Naive thymus-derived CD4-positive, alpha-beta T cell (primary cell): ENCODE measurements at regions of chr11 and their contacts with region 1.

Region 1: DNA sequence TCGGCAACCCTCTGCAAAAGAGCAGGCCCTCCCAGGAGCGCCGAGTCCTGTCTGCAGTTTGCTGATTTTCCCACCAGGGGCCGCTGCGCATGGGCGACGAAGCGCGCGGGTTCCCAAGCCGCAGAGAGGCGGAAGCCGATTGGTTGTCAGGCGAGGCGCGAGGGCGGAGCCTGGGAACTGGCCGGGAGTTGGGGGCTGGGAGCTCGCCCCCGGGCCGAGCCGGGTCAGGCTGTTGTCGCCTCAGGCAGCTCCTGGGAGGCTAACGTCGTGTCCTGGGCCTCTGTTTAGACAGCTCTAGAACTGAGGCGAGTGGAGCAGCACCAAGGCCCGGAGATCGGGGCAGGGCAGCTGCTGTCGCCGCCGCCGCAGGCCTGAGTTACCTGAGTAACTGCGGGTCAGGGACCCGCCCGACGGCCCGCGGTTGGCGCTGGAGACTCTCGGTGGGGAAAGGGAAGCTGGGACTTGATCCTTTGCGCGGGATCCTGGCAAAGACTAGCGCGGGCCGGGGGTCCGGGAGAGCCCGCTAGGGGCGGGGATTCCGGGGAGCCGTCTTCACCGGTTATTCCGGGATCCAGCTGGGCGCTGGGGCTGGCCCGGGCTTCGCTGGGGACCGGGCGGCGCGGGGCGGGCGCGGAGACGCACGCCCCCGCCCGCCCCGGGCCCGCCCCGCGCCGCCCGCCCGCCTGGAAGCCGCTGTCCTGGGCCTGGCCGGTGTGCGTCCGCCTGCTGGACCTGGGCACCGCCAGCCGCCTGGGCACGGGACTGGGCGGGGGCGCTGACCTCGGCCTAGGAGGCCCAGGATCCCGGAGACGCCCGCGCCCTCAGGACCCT is at the start of gene STIM1:
- DNase-seq: peak; percentile 94 to 99 (median 97)
- ATAC-seq: peak; percentile 89
- H3K4me3 ChIP-seq: peak within 1 kb of the TSS; percentile 87
- H3K4me3 Mint-ChIP-seq: peak within 1 kb of the TSS; percentile 86 to 98 (median 92)
- H3K27ac ChIP-seq: peak within 1 kb of the TSS; percentile 92
- H3K27ac Mint-ChIP-seq: peak within 1 kb of the TSS; percentile 93 to 100 (median 98)
- H3K4me1 ChIP-seq: peaks cover 49 to 57% of the 10 kb centered on the region in 2 donors
- H3K4me1 Mint-ChIP-seq: peaks cover 53 to 72% (median 61%) of the 10 kb centered on the region in 7 donors
- H3K27me3 ChIP-seq: no peaks in the 10 kb centered on the region
- H3K27me3 Mint-ChIP-seq: peaks cover 0 to 2% (median 0%) of the 10 kb centered on the region in 5 donors
- total RNA-seq, gene STIM1: 95.6 to 117 (median 103) TPM

Region 2: GRCh38 chr11:3807909-3808860 is 47.0 kb before region 1 on chr11 and contains the start of gene PGAP2:
- CTCF ChIA-PET with region 1: interaction called, 6 read pairs
- POLR2A ChIA-PET with region 1: interaction called, 14 read pairs
- intact Hi-C with region 1: loop called (anchors 1 kb)
- DNase-seq: peak; percentile 37 to 75 (median 52)
- ATAC-seq: peak; percentile 83
- H3K4me3 ChIP-seq: peak within 1 kb of the TSS; percentile 66
- H3K4me3 Mint-ChIP-seq: peak within 1 kb of the TSS; percentile 90 to 99 (median 96)
- H3K27ac ChIP-seq: peak within 1 kb of the TSS; percentile 78
- H3K27ac Mint-ChIP-seq: peak within 1 kb of the TSS; percentile 77 to 97 (median 93)
- H3K4me1 ChIP-seq: peaks cover 3 to 12% of the 10 kb centered on the region in 2 donors
- H3K4me1 Mint-ChIP-seq: peaks cover 12 to 27% (median 18%) of the 10 kb centered on the region in 7 donors
- H3K27me3 ChIP-seq: no peaks in the 10 kb centered on the region
- H3K27me3 Mint-ChIP-seq: no peaks in the 10 kb centered on the region
- total RNA-seq, gene PGAP2: 20.8 to 28.3 (median 26.1) TPM

Region 3: DNA sequence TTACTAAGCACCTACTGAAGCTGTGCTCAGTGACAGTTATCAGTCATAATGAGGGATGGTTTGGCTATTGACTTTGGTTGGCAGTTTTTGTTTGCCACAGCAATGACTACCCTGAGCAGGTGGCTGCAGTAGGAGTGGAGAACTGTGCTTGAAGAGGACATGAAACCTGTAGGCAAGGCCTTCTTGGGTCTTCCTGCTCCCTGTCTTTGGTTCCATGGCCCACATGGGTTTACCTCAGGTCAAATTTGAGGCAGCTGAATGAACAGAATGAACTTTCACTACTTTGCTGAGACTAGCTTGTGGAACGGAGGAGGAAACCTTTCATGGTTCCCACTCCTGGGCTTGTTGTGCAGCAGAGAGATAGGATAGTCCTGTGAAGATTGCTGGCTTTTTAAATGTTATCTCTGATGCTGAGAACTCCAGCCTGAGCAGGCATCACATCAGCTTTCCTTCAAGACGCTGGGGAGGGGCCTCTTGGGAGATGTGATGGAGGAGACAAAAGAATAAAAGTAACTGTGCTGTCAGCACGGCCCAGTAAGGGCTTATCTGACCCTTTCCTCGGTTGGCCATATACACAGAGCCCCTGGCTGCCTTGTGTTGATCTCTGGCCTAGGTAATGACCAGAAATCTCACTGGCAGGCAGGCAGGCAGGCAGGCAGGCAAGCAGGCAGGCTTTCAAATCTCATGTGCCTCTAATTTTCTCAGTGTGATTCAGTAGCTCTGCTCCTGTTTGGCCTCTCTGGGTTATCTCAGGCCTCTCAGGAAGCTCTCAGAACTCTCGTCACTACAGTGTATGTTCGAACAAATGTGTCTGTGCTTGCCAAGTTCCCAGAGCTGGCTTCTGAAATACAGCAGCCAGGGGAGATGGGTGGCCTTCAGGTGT is 12.3 kb after region 1 on chr11:
- CTCF ChIA-PET with region 1: interaction called, 23 read pairs
- POLR2A ChIA-PET with region 1: interaction called, 82 read pairs
- intact Hi-C with region 1: loop called (anchors 1 kb)
- DNase-seq: peak in 1 of 9 donors; percentile 41
- ATAC-seq: peak; percentile 30
- H3K4me3 ChIP-seq: no peak overlapping the region
- H3K4me3 Mint-ChIP-seq: peak overlapping the region; percentile 57 to 84 (median 72)
- H3K27ac ChIP-seq: peak overlapping the region; percentile 63
- H3K27ac Mint-ChIP-seq: peak overlapping the region; percentile 75 to 95 (median 86)
- H3K4me1 ChIP-seq: peaks cover 42 to 67% of the 10 kb centered on the region in 2 donors
- H3K4me1 Mint-ChIP-seq: peaks cover 69 to 95% (median 87%) of the 10 kb centered on the region in 7 donors
- H3K27me3 ChIP-seq: no peaks in the 10 kb centered on the region
- H3K27me3 Mint-ChIP-seq: no peaks in the 10 kb centered on the region

Region 4: DNA sequence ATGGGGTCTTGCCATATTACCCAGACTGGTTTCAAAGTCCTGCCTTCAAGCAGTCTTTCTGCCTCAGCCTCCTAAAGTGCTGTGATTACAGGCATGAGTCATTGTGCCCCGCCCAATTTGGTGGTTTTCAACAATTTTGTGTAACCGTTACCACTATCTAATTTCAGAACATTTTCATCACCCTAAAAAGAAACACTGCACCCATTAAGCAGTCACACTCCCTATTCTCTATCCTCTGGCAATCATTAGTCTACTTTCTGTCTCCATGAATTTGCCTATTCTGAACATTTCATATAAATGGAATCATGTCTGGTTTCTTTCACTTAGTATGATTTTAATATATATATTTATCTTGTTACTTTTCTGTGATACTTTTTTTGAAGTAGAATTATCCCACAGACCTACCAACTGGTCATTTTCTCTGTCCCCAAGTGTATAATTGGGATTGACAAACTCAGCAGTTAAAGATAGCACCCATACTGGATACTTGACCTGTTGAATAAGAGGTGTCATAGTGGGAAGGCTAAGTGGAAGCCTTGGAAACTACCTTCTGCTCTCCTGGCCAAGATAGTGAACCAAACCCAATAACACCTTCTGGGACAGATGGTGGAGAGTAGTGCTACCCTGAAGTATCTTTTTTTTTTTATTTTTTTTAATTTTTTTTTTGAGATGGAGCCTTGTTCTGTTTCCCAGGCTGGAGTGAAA is 65.1 kb after region 1 on chr11:
- CTCF ChIA-PET with region 1: interaction called, 4 read pairs
- POLR2A ChIA-PET with region 1: interaction called, 4 read pairs
- intact Hi-C with region 1: loop called in 1 of 2 experiments (anchors 1 kb)
- DNase-seq: peak in 2 of 9 donors; percentile 48 to 62
- ATAC-seq: peak; percentile 86
- H3K4me3 ChIP-seq: no peak overlapping the region
- H3K4me3 Mint-ChIP-seq: peak overlapping the region in 7 of 10 donors; percentile 12 to 66 (median 44)
- H3K27ac ChIP-seq: no peak overlapping the region
- H3K27ac Mint-ChIP-seq: peak overlapping the region in 5 of 9 donors; percentile 22 to 53 (median 30)
- H3K4me1 ChIP-seq: peaks cover 11 to 35% of the 10 kb centered on the region in 2 donors
- H3K4me1 Mint-ChIP-seq: peaks cover 39 to 70% (median 62%) of the 10 kb centered on the region in 7 donors
- H3K27me3 ChIP-seq: no peaks in the 10 kb centered on the region
- H3K27me3 Mint-ChIP-seq: no peaks in the 10 kb centered on the region

Region 5: GRCh38 chr11:3977078-3977477 is 121.9 kb after region 1 on chr11:
- CTCF ChIA-PET with region 1: interaction called, 45 read pairs
- POLR2A ChIA-PET with region 1: interaction called, 10 read pairs
- intact Hi-C with region 1: no loop called
- DNase-seq: no peak
- ATAC-seq: no peak
- H3K4me3 ChIP-seq: no peak overlapping the region
- H3K4me3 Mint-ChIP-seq: no peak overlapping the region
- H3K27ac ChIP-seq: no peak overlapping the region
- H3K27ac Mint-ChIP-seq: peak overlapping the region in 3 of 9 donors; percentile 15 to 77 (median 43)
- H3K4me1 ChIP-seq: peaks cover 7 to 15% of the 10 kb centered on the region in 2 donors
- H3K4me1 Mint-ChIP-seq: peaks cover 47 to 89% (median 80%) of the 10 kb centered on the region in 7 donors
- H3K27me3 ChIP-seq: no peaks in the 10 kb centered on the region
- H3K27me3 Mint-ChIP-seq: no peaks in the 10 kb centered on the region

Region 6: GRCh38 chr11:4094348-4095291 is 239.4 kb after region 1 on chr11 and contains the start of gene RRM1:
- CTCF ChIA-PET with region 1: interaction called, 4 read pairs
- POLR2A ChIA-PET with region 1: interaction called, 13 read pairs
- intact Hi-C with region 1: loop called (anchors 1 kb)
- DNase-seq: peak; percentile 88 to 96 (median 94)
- ATAC-seq: peak; percentile 95
- H3K4me3 ChIP-seq: peak within 1 kb of the TSS; percentile 83
- H3K4me3 Mint-ChIP-seq: peak within 1 kb of the TSS; percentile 92 to 99 (median 97)
- H3K27ac ChIP-seq: peak within 1 kb of the TSS; percentile 97
- H3K27ac Mint-ChIP-seq: peak within 1 kb of the TSS; percentile 94 to 99 (median 98)
- H3K4me1 ChIP-seq: peaks cover 46 to 63% of the 10 kb centered on the region in 2 donors
- H3K4me1 Mint-ChIP-seq: peaks cover 63 to 90% (median 84%) of the 10 kb centered on the region in 7 donors
- H3K27me3 ChIP-seq: no peaks in the 10 kb centered on the region
- H3K27me3 Mint-ChIP-seq: no peaks in the 10 kb centered on the region
- total RNA-seq, gene RRM1: 33.6 to 140 (median 40.3) TPM